ENCODE measurements at regions of chr16 and their contacts with region 1.

Region 1: GRCh38 chr16:15996432-15997109 is 47.2 kb downstream of the ABCC1 start:
- DNase-seq: peak; percentile 99
- ATAC-seq: peak; percentile 85
- H3K4me3 ChIP-seq: 0 out of 6 replicates have a peak overlapping the region, but pooled peaks of 1 of the 3 experiments have one; percentile 1
- H3K27ac ChIP-seq: peak overlapping the region; percentile 7
- H3K4me1 ChIP-seq: peaks cover 41% of the 10 kb centered on the region
- H3K27me3 ChIP-seq: no peaks in the 10 kb centered on the region
- CTCF ChIP-seq: peak; percentile 72
- EP300 ChIP-seq: peak; percentile 64 to 86; a peak in 3 of 4 replicates
- POLR2A ChIP-seq: no peak
- RAD21 ChIP-seq: peak; percentile 79; the same call in 1 of the 2 replicates

Region 2: DNA sequence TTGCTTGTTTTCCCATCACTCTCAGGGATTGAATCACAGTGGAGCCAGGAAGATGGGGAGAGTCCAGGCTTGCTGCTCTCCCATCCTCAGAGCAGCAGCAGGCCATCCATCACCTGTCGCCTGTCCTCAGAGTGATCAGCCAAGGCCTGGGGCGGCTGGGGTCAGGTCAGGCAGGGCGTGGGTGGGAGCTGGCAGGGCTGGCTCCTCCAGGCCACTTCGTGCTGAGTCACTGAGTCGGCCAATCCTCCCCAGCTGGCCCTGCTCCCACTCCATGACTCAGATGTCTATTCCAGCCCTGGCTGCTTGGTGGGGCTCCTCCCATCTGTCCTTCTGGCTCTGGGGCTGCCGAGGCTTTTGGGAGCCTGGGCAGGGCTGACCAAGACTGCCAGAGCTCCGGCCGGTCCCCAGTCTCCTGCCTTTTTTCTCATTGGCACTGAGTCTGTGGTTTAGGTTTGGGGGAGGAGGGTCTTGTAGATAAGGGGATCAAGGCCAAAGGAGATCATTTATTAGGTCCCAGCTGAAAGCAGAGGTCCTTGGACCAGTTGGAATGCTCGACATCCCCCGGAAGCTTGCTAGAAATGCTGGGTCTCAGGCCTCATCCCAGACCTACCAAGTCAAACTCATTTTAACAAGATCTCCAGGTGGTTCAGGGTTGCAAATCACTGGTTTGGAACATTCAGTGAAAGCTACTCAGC is 25.6 kb after region 1 on chr16:
- CTCF ChIA-PET with region 1: interaction called, 4 read pairs
- POLR2A ChIA-PET with region 1: interaction called, 25 read pairs
- in situ Hi-C with region 1: no loop called
- intact Hi-C with region 1: loop called (anchors 1 kb)
- DNase-seq: peak; percentile 88
- ATAC-seq: peak; percentile 96
- H3K4me3 ChIP-seq: no peak overlapping the region
- H3K27ac ChIP-seq: peak overlapping the region; percentile 4
- H3K4me1 ChIP-seq: peaks cover 29% of the 10 kb centered on the region
- H3K27me3 ChIP-seq: no peaks in the 10 kb centered on the region
- CTCF ChIP-seq: no peak
- EP300 ChIP-seq: peak; percentile 37 to 71; a peak in 2 of 4 replicates
- POLR2A ChIP-seq: no peak; a peak in 1 of 4 replicates
- RAD21 ChIP-seq: peak; percentile 35; the same call in 1 of the 2 replicates